PC-3 (cell line): ENCODE measurements at regions of chr6 and their contacts with region 1.

Region 1: GRCh38 chr6:42879372-42880239 is at the start of gene RPL7L1:
- DNase-seq: peak; percentile 85
- ATAC-seq: peak; percentile 89
- H3K4me3 ChIP-seq: peak within 1 kb of the TSS; percentile 85
- H3K27ac ChIP-seq: peak within 1 kb of the TSS; percentile 76
- H3K4me1 ChIP-seq: peaks cover 4% of the 10 kb centered on the region; the same call in 1 of the 2 replicates
- H3K27me3 ChIP-seq: no peaks in the 10 kb centered on the region
- CTCF ChIP-seq: no peak
- total RNA-seq, gene RPL7L1: 87.6 and 99.5 TPM in 2 replicates

Region 2: DNA sequence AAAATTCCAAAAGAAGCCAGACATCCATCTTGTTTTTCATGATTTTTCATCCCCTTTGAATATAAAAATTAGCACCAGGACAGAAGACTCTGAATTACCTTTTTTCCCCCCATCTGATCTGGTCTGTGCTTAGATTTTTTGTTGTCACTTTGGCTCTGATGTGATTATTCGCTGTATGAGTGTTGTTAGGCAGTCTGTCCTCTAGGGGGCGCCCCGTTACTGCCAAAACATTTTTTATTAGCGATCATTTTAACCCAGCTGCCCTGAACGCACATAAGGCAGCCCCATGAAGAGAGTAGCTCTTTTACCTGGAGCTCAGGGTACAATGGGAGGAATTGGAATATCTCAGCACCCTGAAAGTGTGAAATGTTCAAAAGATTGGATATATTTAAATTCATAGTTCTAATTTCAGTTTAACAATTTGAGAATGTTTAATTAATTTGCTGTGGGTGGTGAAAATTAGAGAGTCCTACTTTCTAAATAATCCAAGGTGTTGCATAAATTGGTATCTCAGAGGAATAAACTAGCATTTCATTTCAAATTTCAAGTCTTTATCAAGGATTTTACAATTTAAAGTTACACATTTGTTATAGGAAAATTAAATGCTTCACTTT is 218.0 kb before region 1 on chr6:
- CTCF ChIA-PET with region 1: interaction called, 6 read pairs
- POLR2A ChIA-PET with region 1: no interaction called
- intact Hi-C with region 1: loop called (anchors 1 kb)
- DNase-seq: peak; percentile 77
- ATAC-seq: peak; percentile 65
- H3K4me3 ChIP-seq: no peak overlapping the region
- H3K27ac ChIP-seq: no peak overlapping the region
- H3K4me1 ChIP-seq: no peaks in the 10 kb centered on the region
- H3K27me3 ChIP-seq: no peaks in the 10 kb centered on the region
- CTCF ChIP-seq: peak; percentile 95

Region 3: DNA sequence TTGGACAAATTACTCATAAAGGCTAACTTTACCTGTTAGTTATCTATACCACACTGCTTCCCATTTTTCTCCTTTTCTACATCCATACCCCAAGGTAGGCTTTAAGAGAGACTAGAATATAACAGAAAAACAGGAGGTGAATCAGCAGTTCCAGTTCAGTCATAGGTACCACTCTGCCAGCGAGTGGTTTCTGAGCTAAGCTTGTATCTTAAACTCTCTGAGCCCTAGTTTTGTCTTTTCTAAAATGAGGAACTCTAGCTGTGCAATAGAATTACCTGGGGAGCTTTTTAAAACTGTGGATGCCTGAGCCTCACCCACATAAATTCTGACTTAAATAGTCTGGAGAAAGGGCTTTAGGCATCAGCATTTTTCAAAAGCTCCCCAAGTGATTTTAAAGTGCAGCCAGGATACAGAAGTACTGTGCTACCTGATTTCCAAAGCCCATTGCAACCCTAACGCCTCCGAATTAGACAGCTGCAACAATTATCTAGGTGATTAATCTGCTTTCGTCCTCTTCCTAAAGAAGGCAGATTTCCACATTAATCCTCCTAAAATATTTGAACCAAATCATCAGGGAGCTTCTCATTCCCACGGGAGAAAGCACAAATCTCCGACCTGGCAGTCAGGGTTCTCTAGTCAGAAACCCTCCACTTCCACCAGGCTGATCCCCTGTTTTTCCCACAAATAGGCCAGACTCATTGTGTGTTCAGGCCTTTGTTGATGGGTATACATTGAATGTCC is 37.6 kb before region 1 on chr6:
- CTCF ChIA-PET with region 1: no interaction called
- POLR2A ChIA-PET with region 1: no interaction called
- intact Hi-C with region 1: no loop called
- DNase-seq: no peak
- ATAC-seq: no peak
- H3K4me3 ChIP-seq: no peak overlapping the region
- H3K27ac ChIP-seq: no peak overlapping the region
- H3K4me1 ChIP-seq: no peaks in the 10 kb centered on the region
- H3K27me3 ChIP-seq: no peaks in the 10 kb centered on the region
- CTCF ChIP-seq: no peak

Region 4: DNA sequence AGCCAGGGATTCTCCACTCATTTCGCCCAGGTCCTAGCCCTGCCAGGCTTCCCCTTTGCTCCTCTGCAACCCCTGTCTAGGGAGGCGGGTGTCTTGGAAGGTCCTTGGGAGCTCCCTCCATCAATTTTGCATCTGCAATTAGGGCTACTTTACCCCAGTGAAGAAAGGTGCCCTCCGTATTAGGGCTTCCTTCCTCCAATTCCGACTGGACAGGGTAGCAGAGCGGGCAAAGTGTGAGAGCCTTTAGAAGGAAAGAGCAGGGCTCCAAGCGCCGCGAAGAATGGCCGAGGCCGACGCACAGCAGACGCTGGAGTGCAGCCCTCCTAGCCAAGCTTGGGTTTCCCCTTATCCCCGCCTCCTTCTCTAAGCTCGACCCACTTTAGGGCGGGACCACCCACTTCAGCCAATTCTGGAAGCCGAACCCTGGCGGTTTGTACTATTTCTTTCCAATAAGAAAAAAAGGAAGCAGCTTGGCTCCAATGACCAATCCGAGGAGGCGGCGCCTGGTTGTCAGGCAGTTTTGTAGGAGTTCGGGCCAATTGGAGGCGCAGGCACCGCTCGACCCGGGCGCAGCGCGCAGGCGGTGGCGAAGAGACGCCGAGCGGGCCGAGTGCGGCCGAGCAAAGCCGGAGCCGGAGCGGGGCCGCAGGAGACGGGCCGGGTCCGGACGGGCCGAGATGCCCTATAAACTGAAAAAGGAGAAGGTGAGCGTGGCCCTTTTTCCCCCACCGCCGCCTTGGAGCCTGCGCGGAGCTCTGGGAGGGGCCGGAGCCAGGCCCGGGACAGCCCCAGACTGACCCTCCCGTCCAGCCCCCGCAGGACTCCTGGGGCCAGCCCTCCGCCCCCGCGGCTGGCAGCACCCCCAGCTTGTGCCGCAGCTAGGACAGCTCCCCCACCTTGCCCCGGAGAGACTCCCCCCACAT is 104.7 kb after region 1 on chr6 and contains the start of gene PPP2R5D:
- CTCF ChIA-PET with region 1: no interaction called
- POLR2A ChIA-PET with region 1: interaction called, 13 read pairs
- intact Hi-C with region 1: no loop called
- DNase-seq: peak; percentile 99
- ATAC-seq: peak; percentile 91
- H3K4me3 ChIP-seq: peak within 1 kb of the TSS; percentile 82
- H3K27ac ChIP-seq: peak within 1 kb of the TSS; percentile 12; the same call in 1 of the 2 replicates
- H3K4me1 ChIP-seq: peaks cover 32% of the 10 kb centered on the region
- H3K27me3 ChIP-seq: no peaks in the 10 kb centered on the region
- CTCF ChIP-seq: no peak
- total RNA-seq, gene PPP2R5D: 54.1 and 55.6 TPM in 2 replicates